ENCODE measurements at regions of chr2 and their contacts with region 1.

Region 1: DNA sequence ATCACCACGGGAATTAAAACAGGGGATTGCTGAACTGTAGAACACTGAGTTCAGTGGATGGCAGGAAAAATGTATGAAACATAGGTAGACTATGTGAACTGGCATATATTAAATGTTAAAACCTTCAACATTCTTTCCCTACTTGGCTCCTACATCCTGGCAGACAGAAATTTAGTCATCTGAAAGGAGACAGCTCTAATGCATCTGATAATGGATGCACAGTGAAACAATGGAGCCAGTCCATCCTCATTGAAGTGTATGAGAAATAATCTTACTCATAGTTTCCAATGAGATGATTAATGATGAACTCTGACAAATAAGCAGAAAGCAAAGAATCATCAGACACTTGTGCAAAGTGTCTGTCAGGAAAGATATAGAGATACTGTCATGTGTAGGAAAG is 1629.7 kb upstream of the TMEFF2 start:
- DNase-seq: no peak
- H3K4me3 Mint-ChIP-seq: no peak overlapping the region
- H3K27ac Mint-ChIP-seq: no peak overlapping the region
- H3K4me1 Mint-ChIP-seq: no peaks in the 10 kb centered on the region
- H3K27me3 Mint-ChIP-seq: no peaks in the 10 kb centered on the region

Region 2: GRCh38 chr2:193584522-193584938 is 239.9 kb before region 1 on chr2:
- CTCF ChIA-PET with region 1: no interaction called
- intact Hi-C with region 1: no loop called
- DNase-seq: no peak
- H3K4me3 Mint-ChIP-seq: no peak overlapping the region
- H3K27ac Mint-ChIP-seq: no peak overlapping the region
- H3K4me1 Mint-ChIP-seq: no peaks in the 10 kb centered on the region
- H3K27me3 Mint-ChIP-seq: no peaks in the 10 kb centered on the region

Region 3: DNA sequence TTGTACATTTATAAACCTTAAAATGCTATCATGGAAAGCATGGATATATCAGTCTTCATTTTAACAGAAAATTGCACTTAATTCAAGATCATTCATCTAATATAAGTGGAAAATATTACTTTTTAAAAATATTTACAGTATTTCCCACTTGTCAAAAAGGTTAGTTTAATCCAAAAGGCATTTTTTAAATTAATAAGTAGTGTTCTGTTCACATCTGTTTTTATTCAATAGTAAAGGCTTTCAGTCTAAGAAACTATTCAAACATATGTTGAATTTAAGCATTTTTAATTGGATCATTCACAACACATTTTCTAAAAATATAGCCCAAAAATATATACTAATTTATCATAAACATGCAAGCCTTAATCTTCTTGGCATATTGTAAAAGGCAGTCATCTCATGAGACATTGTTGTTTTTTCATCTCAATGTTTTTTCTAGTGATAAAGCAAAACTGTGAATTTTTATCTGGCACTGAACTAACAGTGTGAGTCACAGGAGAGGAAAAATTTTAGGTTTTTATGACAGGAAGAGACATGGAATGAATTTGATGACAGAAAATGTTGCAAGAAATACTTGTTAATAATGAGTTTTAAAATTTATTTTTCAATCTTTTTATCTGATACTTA is 12.8 kb after region 1 on chr2:
- CTCF ChIA-PET with region 1: no interaction called
- intact Hi-C with region 1: loop called (anchors 1 kb)
- DNase-seq: no peak
- H3K4me3 Mint-ChIP-seq: no peak overlapping the region
- H3K27ac Mint-ChIP-seq: no peak overlapping the region
- H3K4me1 Mint-ChIP-seq: no peaks in the 10 kb centered on the region
- H3K27me3 Mint-ChIP-seq: no peaks in the 10 kb centered on the region

Measured in activated naive CD4-positive, alpha-beta T cell treated with anti-CD3 and anti-CD28 coated beads for 36 hours (primary cell).